Activated naive CD4-positive, alpha-beta T cell treated with anti-CD3 and anti-CD28 coated beads, Interleukin-2, amount 10 ng/mL, durations not matched to agents 7 days and 5 days (primary cell): ENCODE measurements at regions of chr11 and their contacts with region 1.

Region 1: GRCh38 chr11:8006349-8006977 is 19.3 kb downstream of the EIF3F start:
- DNase-seq: peak; percentile 58
- H3K4me3 Mint-ChIP-seq: no peak overlapping the region
- H3K27ac Mint-ChIP-seq: no peak overlapping the region
- H3K4me1 Mint-ChIP-seq: no peaks in the 10 kb centered on the region
- H3K27me3 Mint-ChIP-seq: peaks cover 9% of the 10 kb centered on the region

Region 2: DNA sequence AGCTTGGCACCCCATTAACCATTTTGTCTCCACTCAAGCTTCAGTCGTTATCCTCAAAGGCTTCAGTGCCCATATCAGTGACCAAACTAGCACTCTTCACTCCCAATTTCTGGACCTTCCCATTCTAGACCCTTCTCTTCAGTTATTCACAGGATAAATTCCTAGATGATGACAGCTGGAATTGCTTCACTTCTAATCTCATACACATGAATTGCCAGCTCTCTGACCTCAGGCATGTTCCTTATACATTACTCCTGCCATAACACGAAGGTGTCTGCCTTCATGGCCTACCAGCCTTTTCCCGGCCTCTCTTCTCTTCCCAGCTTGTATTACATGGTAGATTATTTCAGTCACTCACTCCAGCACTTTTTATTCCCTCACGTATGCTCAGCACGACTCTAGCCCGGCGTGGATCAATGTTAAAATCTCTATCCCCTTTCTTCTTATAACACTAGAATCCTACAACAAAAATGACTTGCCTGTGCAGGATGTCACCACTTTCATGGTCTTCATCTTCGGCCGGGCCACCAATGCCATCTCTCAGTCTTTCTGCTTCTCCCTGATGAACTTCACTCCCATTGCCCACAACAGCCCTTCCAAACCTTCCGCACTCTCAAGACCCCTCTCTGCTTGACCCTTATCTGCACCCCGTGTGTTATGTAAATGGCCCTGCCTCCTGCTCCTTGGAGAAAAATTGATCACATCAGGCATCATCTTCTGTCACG is 17.5 kb after region 1 on chr11:
- CTCF ChIA-PET with region 1: interaction called, 18 read pairs
- DNase-seq: no peak
- H3K4me3 Mint-ChIP-seq: no peak overlapping the region
- H3K27ac Mint-ChIP-seq: no peak overlapping the region
- H3K4me1 Mint-ChIP-seq: peaks cover 8% of the 10 kb centered on the region
- H3K27me3 Mint-ChIP-seq: peaks cover 19% of the 10 kb centered on the region

Region 3: GRCh38 chr11:8033305-8034105 is 27.0 kb after region 1 on chr11:
- CTCF ChIA-PET with region 1: interaction called, 15 read pairs
- DNase-seq: peak; percentile 51
- H3K4me3 Mint-ChIP-seq: no peak overlapping the region
- H3K27ac Mint-ChIP-seq: no peak overlapping the region
- H3K4me1 Mint-ChIP-seq: peaks cover 4% of the 10 kb centered on the region
- H3K27me3 Mint-ChIP-seq: peaks cover 53% of the 10 kb centered on the region